Posterior vena cava (tissue), 2 donors: ENCODE measurements at regions of chr9 and their contacts with region 1.

Region 1: GRCh38 chr9:78756813-78757510 is 460.0 kb downstream of the PSAT1 start:
- DNase-seq: no peak

Region 2: DNA sequence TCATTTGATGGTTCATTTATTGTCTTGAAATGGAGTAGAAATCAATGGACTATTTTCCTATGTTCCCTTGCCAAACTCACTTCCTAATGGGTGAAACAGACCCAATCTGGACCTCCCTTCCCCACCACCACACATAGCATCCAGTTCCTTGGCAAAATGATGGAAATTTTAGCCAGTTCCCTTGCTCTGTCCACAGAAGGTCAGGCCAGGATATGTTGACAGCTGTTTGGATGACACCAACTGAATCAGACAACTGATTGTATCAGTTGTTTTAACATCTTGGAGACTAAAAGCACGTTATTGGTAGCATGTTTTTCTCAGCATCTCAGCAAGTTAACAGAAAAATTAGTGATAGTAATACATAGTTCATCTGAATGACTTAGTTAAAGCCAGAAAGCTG is 74.8 kb after region 1 on chr9:
- intact Hi-C with region 1: loop called in 1 of 2 experiments (anchors 2 kb)
- DNase-seq: no peak

Region 3: DNA sequence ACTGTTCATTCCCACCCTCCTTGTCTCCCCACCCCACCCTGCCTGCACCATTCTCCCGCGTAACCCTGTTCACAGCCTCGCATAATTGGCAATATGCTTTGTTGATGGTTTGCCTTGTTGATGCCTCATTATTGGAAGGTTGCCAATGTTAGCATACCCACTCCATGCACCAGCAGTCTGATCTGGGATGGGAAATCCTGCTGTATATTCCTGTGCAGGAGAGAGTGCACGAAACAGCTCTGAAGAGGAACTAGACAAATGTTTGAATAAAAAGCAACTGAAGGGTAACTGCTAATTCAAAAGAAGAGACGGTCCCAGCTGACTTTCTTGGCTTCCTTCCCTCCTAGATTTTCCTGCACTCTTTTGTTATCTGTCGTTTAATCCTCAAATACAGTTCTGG is 543.1 kb after region 1 on chr9:
- intact Hi-C with region 1: loop called in 1 of 2 experiments (anchors 5 kb)
- DNase-seq: no peak